Stomach (tissue), 19 donors: ENCODE measurements at regions of chr9 and their contacts with region 1.

Region 1: DNA sequence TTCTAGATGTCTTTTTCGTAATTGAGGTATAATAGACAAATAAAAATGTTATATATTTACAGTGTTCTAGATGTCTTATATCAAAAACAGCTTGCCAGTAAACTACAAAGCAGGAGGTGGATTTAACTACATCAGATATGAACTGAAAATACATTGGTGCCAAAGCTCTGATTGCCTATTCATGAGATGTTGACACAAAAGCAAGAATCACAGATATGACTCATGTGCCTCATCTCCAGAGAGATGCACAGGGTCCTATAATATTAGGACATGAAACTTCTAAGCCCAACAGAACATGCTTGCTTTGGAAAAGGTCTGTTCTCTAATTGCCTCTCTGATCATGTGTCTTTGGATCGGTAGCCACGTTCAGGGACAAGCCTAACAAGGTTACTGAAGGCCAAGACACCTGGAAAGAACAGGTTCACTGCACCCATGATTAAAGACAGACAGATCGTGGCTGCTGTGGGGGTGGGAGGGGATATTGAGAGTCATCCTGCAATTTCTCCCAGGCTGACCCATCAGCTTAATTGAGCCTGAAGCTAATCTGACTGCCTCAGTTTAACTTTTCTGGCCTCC is 16.8 kb downstream of the ABCA1 start:
- DNase-seq: no peak
- H3K4me3 ChIP-seq: no peak overlapping the region
- H3K27ac ChIP-seq: peak overlapping the region in 3 of 5 donors; percentile 3 to 49 (median 16)
- H3K4me1 ChIP-seq: peaks cover 60 to 99% (median 81%) of the 10 kb centered on the region in 4 donors
- H3K27me3 ChIP-seq: no peaks in the 10 kb centered on the region
- CTCF ChIP-seq: no peak
- EP300 ChIP-seq: no peak
- POLR2A ChIP-seq: no peak

Region 2: DNA sequence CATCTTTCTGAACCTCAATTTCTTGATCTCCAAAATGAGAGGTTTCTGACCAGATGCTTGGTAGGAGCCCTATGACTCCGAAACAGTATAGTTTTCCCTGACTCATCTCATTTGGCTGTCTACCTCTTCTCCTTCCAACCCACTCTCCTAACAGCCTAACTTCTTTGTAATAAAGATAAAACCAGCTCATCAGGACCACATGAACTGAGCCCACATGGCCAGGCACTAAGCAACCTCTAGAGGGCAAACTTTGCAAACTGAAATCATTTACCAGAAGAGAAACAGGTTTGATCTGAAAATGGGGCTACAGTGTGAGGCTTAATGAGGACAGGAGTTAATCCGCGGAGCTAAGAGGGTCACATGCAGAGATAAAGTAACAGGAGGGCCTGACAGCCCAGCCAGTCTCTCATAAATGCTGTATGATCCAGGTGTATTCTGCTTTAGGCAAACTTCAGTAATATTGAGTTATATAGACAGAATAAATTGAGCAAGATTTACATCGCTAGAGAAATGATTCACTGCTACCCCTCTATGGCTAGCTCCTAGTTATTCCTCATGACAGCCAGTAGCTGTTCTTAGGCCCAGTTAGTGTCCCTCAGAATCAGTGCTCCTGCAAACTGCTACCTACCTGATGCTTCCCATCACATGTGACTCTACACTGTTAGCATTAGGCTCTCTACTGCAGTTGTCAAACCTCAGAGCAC is 47.8 kb before region 1 on chr9:
- intact Hi-C with region 1: loop called (anchors 10 kb)
- DNase-seq: peak; percentile 38 to 89
- H3K4me3 ChIP-seq: no peak overlapping the region
- H3K27ac ChIP-seq: peak overlapping the region in 4 of 5 donors; percentile 0 to 56 (median 39)
- H3K4me1 ChIP-seq: peaks cover 5 to 84% (median 29%) of the 10 kb centered on the region in 4 donors
- H3K27me3 ChIP-seq: no peaks in the 10 kb centered on the region
- CTCF ChIP-seq: peak in 5 of 7 experiments; percentile 34 to 72 (median 63)
- EP300 ChIP-seq: no peak
- POLR2A ChIP-seq: no peak

Region 3: DNA sequence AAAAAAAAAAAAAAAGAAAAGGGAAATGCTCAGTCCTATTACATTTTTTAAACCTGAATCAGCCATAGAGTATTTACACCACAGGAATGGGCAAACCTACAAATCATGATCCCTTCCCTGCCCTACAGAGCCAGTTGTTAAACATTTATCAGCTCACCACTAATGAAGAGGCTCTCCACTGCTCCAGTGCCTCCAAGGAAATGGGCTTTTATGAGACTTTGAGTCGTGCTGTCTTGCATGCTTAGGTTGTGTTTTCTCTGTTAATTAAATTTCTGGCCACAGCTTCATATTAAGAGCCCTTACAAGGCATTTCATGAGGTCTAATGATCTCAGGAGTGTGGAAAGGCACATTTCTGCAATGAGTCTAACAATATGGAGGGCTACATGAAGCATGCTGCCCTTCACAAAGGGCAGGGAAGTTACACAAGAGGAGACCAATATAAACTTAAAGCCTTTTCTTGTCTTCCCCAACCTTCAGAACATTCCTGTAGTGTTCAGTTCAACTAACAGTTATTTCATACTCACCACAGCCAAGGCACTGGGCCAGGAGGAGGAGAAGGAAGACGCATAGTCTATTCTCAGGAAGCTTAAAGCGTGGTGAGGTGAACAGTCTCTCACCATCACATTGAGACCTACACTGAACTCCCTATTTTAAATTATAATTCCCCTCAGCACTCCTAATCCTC is 156.9 kb after region 1 on chr9:
- intact Hi-C with region 1: no loop called
- DNase-seq: no peak
- H3K4me3 ChIP-seq: no peak overlapping the region
- H3K27ac ChIP-seq: no peak overlapping the region
- H3K4me1 ChIP-seq: peaks cover 29 to 41% (median 32%) of the 10 kb centered on the region in 4 donors
- H3K27me3 ChIP-seq: no peaks in the 10 kb centered on the region
- CTCF ChIP-seq: no peak
- EP300 ChIP-seq: no peak
- POLR2A ChIP-seq: no peak